ENCODE measurements at regions of chr10 and their contacts with region 1.

Region 1: DNA sequence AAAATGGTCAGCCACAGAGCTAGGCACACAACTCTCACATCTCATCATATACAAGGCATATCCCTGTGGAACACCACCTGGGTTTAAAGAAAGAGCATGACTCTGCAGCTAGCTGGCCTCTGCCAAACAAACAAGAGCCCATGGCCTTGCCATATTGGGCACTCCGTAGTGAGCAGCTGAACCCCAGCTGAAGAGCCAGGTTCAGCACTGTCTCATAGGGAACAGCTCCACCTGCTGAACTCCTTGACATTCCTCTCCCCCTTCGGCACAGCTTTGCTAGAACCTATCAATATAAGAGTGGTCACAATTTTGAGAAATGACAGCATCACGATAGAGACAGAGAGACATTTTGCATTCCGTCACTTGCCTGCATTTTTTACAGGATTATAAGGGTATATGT is 20.0 kb downstream of the SORCS1 start:
- DNase-seq: peak; percentile 30 to 35
- H3K4me3 ChIP-seq: no peak overlapping the region
- H3K27ac ChIP-seq: no peak overlapping the region
- H3K4me1 ChIP-seq: no peaks in the 10 kb centered on the region
- H3K27me3 ChIP-seq: no peaks in the 10 kb centered on the region
- CTCF ChIP-seq: peak in 4 of 6 experiments; percentile 17 to 57 (median 47)
- POLR2A ChIP-seq: no peak

Region 2: GRCh38 chr10:106795619-106796018 is 348.9 kb before region 1 on chr10:
- intact Hi-C with region 1: loop called (anchors 10 kb)
- DNase-seq: peak; percentile 65
- H3K4me3 ChIP-seq: no peak overlapping the region
- H3K27ac ChIP-seq: no peak overlapping the region
- H3K4me1 ChIP-seq: no peaks in the 10 kb centered on the region
- H3K27me3 ChIP-seq: no peaks in the 10 kb centered on the region
- CTCF ChIP-seq: peak; percentile 22 to 76 (median 58)
- POLR2A ChIP-seq: no peak

Region 3: GRCh38 chr10:106825576-106826364 is 318.7 kb before region 1 on chr10:
- intact Hi-C with region 1: no loop called
- DNase-seq: peak; percentile 23 to 27
- H3K4me3 ChIP-seq: no peak overlapping the region
- H3K27ac ChIP-seq: peak overlapping the region in 2 of 3 donors; percentile 17 to 24
- H3K4me1 ChIP-seq: peaks cover 0 to 18% of the 10 kb centered on the region in 2 donors
- H3K27me3 ChIP-seq: no peaks in the 10 kb centered on the region
- CTCF ChIP-seq: peak in 1 of 6 experiments; percentile 6
- POLR2A ChIP-seq: no peak

Region 4: GRCh38 chr10:106931159-106931852 is 213.2 kb before region 1 on chr10:
- intact Hi-C with region 1: no loop called
- DNase-seq: peak; percentile 26 to 31
- H3K4me3 ChIP-seq: no peak overlapping the region
- H3K27ac ChIP-seq: no peak overlapping the region
- H3K4me1 ChIP-seq: peaks cover 20% of the 10 kb centered on the region in 2 donors
- H3K27me3 ChIP-seq: no peaks in the 10 kb centered on the region
- CTCF ChIP-seq: no peak
- POLR2A ChIP-seq: no peak